Heart right ventricle (tissue), 16 donors: ENCODE measurements at regions of chr2 and their contacts with region 1.

Region 1: DNA sequence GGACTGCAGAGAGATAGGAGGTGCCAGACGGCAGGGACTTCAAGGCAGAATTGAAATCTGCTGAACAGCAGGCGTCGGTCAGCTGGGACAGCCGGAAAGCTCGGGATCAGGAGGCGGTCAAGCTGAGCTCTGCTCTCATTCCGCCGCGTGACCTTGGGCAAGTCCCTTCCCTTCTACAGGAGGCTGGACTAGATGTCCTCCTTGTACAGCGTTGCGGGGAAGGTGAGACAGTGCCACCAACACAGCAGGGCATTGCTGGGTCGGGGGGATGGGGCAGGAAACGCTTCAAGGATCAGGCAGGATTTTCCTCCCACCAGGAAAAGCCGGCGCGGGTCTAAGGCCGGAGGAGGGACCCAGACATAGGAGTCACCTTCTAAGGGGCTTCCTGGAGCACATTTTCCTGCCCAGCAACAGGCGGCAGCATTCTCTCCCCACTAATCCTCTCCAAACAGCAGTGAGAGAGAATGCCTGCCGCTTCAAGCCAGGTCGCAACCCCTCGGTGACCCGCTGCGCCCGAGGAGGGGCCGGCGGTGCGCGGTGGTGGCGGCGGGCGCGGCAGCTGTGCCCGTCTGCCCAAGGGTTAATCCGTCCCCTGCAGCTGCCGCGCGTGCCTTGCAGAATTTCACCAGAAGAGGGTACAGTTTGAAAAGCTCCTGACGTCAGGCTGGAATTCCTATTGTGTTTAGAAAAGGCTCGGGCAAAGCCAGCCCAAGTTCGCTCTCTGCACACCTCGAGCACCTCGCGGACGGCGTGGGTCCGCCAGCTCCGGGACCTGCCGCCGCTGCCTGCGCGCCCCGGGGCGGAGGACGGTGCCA is at the start of gene KCNF1:
- DNase-seq: no peak
- ATAC-seq: peak in 2 of 8 donors; percentile 21 to 40
- H3K4me3 ChIP-seq: peak within 1 kb of the TSS in 9 of 10 donors; percentile 27 to 49 (median 41)
- H3K27ac ChIP-seq: no peak within 1 kb of the TSS
- H3K4me1 ChIP-seq: peaks cover 0 to 10% (median 4%) of the 10 kb centered on the region in 9 donors
- H3K27me3 ChIP-seq: peaks cover 0 to 49% (median 39%) of the 10 kb centered on the region in 7 donors
- CTCF ChIP-seq: peak in 5 of 9 donors; percentile 20 to 41 (median 30)
- total RNA-seq, gene KCNF1: 0.10 to 0.42 (median 0.23) TPM in 7 of 10 donors, not detected in the others

Region 2: DNA sequence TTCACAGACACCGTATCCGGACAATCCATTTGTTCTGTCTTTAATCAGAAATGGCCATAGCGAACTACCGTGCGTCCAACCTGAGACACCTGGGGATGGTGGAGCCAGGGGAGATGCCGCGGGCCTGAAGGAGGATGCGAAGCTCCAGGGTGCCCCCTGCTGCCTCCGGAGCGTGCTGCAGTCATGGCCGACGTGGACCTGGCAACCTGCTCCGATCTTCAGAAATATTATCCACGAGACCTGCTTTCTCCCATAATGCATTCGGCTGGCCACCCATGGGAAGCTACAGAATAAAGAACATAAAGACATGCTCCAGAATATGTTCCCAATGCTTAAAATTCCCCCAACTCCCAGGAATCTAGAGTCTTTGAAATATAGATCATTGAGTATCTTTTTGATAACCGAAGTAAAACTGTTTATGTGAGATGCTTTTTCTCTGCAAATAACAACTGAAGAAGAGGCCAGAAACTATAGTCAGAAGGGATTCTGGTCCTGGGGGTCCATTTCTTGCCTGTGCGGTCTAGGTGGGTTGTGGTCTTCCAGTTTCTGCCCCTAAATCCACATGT is 213.1 kb after region 1 on chr2:
- intact Hi-C with region 1: loop called in 5 of 10 experiments (anchors 5 to 10 kb)
- DNase-seq: peak in 1 of 2 donors; percentile 61
- ATAC-seq: peak in 6 of 8 donors; percentile 53 to 75 (median 62)
- H3K4me3 ChIP-seq: no peak overlapping the region
- H3K27ac ChIP-seq: no peak overlapping the region
- H3K4me1 ChIP-seq: peaks cover under 1 to 14% (median 5%) of the 10 kb centered on the region in 9 donors
- H3K27me3 ChIP-seq: peaks cover 0 to 22% (median 7%) of the 10 kb centered on the region in 7 donors
- CTCF ChIP-seq: peak; percentile 51 to 83 (median 72)

Region 3: GRCh38 chr2:11305338-11305737 is 393.9 kb after region 1 on chr2:
- intact Hi-C with region 1: no loop called
- DNase-seq: no peak
- ATAC-seq: peak in 1 of 8 donors; percentile 18
- H3K4me3 ChIP-seq: no peak overlapping the region
- H3K27ac ChIP-seq: no peak overlapping the region
- H3K4me1 ChIP-seq: peaks cover 0 to 56% (median 37%) of the 10 kb centered on the region in 9 donors
- H3K27me3 ChIP-seq: no peaks in the 10 kb centered on the region
- CTCF ChIP-seq: no peak